ENCODE measurements at regions of chr12 and their contacts with region 1.

Region 1: GRCh38 chr12:92065018-92065499 is 80.6 kb downstream of the BTG1 start:
- DNase-seq: peak; percentile 86
- H3K4me3 Mint-ChIP-seq: peak overlapping the region; percentile 22
- H3K27ac Mint-ChIP-seq: peak overlapping the region; percentile 84
- H3K4me1 Mint-ChIP-seq: peaks cover 65% of the 10 kb centered on the region
- H3K27me3 Mint-ChIP-seq: no peaks in the 10 kb centered on the region

Region 2: GRCh38 chr12:91811481-91812287 is 253.4 kb before region 1 on chr12:
- CTCF ChIA-PET with region 1: interaction called, 5 read pairs
- intact Hi-C with region 1: loop called (anchors 5 kb)
- DNase-seq: peak; percentile 86
- H3K4me3 Mint-ChIP-seq: peak overlapping the region; percentile 23
- H3K27ac Mint-ChIP-seq: peak overlapping the region; percentile 76
- H3K4me1 Mint-ChIP-seq: peaks cover 21% of the 10 kb centered on the region
- H3K27me3 Mint-ChIP-seq: no peaks in the 10 kb centered on the region

Region 3: DNA sequence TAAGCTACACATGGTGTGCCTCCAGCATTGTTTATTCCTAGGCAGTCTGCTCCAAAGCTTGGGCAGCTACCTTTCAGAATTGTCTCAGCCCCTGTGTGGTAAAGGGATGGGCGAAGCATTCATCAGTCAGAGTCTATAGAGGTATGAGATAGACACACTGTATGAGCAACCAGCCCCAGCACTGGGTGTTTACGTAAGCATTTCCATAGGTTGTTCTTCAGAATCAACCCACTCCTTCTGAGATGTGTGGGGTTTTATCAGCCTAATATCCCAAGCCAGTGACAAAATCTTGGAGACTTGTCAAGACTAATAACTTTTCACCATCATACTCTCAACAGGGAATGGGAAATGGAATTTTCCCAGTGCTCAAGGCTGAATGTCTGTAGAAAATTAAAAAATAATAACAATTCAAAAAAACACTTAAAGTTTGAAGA is 17.6 kb before region 1 on chr12:
- CTCF ChIA-PET with region 1: interaction called, 3 read pairs
- intact Hi-C with region 1: loop called (anchors 1 kb)
- DNase-seq: peak; percentile 43
- H3K4me3 Mint-ChIP-seq: peak overlapping the region; percentile 56
- H3K27ac Mint-ChIP-seq: peak overlapping the region; percentile 74
- H3K4me1 Mint-ChIP-seq: peaks cover 88% of the 10 kb centered on the region
- H3K27me3 Mint-ChIP-seq: no peaks in the 10 kb centered on the region

Region 4: GRCh38 chr12:92096346-92097136 is 31.5 kb after region 1 on chr12:
- CTCF ChIA-PET with region 1: no interaction called
- intact Hi-C with region 1: loop called (anchors 1 kb)
- DNase-seq: peak; percentile 56
- H3K4me3 Mint-ChIP-seq: peak overlapping the region; percentile 23
- H3K27ac Mint-ChIP-seq: peak overlapping the region; percentile 89
- H3K4me1 Mint-ChIP-seq: peaks cover 51% of the 10 kb centered on the region
- H3K27me3 Mint-ChIP-seq: no peaks in the 10 kb centered on the region

Region 5: GRCh38 chr12:92123780-92124688 is 59.0 kb after region 1 on chr12:
- CTCF ChIA-PET with region 1: no interaction called
- intact Hi-C with region 1: no loop called
- DNase-seq: no peak
- H3K4me3 Mint-ChIP-seq: peak overlapping the region; percentile 34
- H3K27ac Mint-ChIP-seq: peak overlapping the region; percentile 91
- H3K4me1 Mint-ChIP-seq: peaks cover 77% of the 10 kb centered on the region
- H3K27me3 Mint-ChIP-seq: no peaks in the 10 kb centered on the region

Region 6: DNA sequence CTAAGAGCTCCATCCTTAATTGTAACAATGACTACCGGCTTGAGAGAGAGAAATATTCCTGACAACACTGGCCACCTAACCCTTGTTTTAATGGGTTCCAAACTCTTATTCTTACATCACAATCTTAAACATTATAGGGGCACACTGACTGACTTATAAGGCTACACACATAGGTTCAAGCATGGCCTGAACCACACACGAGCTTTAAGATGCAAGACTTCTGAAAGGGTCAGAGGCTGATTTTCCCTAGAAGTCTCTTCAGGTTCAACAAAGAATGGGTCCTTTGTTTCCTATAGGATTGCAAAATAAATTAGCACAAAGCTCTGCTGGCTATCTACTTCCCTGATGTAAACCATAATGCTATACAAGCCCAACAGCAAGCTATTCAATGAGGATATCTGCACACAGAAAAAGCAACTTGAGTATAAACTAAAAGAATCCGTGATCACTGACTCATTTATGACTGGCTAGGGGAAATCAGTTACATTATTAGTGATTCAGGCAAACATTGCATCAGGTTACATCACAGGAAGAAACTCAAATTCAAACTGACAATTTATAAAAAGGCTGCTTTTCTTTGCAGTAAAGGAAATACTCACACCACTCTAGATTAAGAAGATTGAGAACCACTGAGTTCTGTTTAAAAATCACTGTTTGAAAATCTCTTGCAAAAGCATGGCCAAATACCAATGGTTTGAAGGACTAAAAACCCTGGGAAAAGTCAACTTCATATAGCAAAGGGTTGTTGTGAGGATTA is 72.1 kb after region 1 on chr12:
- CTCF ChIA-PET with region 1: no interaction called
- intact Hi-C with region 1: loop called (anchors 1 kb)
- DNase-seq: no peak
- H3K4me3 Mint-ChIP-seq: peak overlapping the region; percentile 100
- H3K27ac Mint-ChIP-seq: peak overlapping the region; percentile 99
- H3K4me1 Mint-ChIP-seq: peaks cover 58% of the 10 kb centered on the region
- H3K27me3 Mint-ChIP-seq: no peaks in the 10 kb centered on the region

Region 7: GRCh38 chr12:92147491-92147890 is 82.4 kb after region 1 on chr12:
- CTCF ChIA-PET with region 1: no interaction called
- intact Hi-C with region 1: no loop called
- DNase-seq: no peak
- H3K4me3 Mint-ChIP-seq: peak overlapping the region; percentile 100
- H3K27ac Mint-ChIP-seq: peak overlapping the region; percentile 100
- H3K4me1 Mint-ChIP-seq: peaks cover 27% of the 10 kb centered on the region
- H3K27me3 Mint-ChIP-seq: no peaks in the 10 kb centered on the region

Region 8: DNA sequence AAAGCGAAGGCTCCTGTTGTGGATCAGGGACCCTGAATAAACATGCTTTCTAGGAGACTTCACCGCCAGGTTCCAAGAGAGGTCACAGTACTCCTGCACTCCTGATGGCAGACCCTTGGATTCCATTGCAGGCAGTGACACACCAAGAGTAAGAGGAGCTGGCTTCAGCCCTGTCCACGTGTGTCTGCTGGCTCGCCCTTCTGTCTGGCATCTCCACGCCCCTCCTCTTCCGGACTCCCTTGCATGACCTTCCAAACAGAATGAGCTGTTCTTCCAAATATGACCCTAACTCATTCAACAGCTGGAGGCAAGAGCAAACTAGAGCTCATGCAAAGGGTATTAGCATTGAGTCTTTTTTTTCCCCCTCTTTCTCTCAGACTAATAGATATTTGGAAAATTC is 404.8 kb after region 1 on chr12:
- CTCF ChIA-PET with region 1: no interaction called
- intact Hi-C with region 1: loop called (anchors 2 kb)
- DNase-seq: no peak
- H3K4me3 Mint-ChIP-seq: no peak overlapping the region
- H3K27ac Mint-ChIP-seq: peak overlapping the region; percentile 89
- H3K4me1 Mint-ChIP-seq: peaks cover 49% of the 10 kb centered on the region
- H3K27me3 Mint-ChIP-seq: no peaks in the 10 kb centered on the region

Region 9: GRCh38 chr12:92511786-92512185 is 446.7 kb after region 1 on chr12:
- CTCF ChIA-PET with region 1: no interaction called
- intact Hi-C with region 1: no loop called
- DNase-seq: no peak
- H3K4me3 Mint-ChIP-seq: no peak overlapping the region
- H3K27ac Mint-ChIP-seq: no peak overlapping the region
- H3K4me1 Mint-ChIP-seq: peaks cover 34% of the 10 kb centered on the region
- H3K27me3 Mint-ChIP-seq: no peaks in the 10 kb centered on the region

Measured in activated naive CD4-positive, alpha-beta T cell treated with anti-CD3 and anti-CD28 coated beads for 36 hours (primary cell).